Activated CD4-positive, alpha-beta memory T cell treated with anti-CD3 and anti-CD28 coated beads for 36 hours (primary cell): ENCODE measurements at regions of chr14 and their contacts with region 1.

Region 1: DNA sequence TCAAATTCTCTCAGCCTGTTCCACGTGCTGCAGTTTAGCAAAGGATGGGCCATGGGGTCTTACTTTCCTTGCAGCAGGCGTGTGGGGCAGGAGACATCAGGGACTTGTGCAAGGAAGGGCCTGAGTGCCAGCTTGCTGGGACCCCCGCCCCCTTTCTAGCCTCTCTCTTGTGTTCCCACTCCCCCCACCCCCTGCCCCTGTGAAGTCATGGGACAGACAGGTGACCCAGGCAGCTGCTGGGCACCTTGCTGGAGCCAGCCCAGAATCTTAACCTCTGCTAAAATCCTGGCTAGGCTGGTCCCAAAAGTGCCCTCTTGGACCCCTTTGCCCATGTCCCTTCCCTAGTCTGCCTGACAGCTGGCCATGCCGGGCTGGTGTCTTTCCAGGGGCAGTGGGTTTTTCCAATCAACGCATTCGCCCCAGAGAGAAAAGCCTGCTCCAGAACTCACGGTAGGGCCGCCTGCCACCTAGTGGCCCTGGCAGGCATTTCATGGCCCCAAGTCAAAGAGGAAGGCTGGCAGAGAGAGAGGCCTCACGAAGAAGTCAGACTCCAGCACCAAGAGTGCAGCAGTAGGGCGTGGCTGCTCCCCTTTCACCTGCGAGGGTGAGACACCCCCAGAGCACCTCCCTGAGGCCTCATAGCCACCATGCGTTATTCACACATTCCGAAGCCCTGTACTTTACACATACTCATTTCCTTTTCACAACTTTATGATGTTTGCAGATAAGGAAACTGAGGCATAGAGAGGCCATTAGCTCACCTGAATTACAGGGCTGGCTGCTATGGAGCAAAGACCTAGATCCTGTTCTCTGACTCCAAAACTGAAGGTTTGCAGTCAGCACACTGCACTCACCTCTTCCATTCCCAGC is 67.4 kb downstream of the LGMN start:
- DNase-seq: peak; percentile 85
- H3K4me3 Mint-ChIP-seq: no peak overlapping the region
- H3K27ac Mint-ChIP-seq: peak overlapping the region; percentile 45
- H3K4me1 Mint-ChIP-seq: peaks cover 32% of the 10 kb centered on the region
- H3K27me3 Mint-ChIP-seq: no peaks in the 10 kb centered on the region

Region 2: DNA sequence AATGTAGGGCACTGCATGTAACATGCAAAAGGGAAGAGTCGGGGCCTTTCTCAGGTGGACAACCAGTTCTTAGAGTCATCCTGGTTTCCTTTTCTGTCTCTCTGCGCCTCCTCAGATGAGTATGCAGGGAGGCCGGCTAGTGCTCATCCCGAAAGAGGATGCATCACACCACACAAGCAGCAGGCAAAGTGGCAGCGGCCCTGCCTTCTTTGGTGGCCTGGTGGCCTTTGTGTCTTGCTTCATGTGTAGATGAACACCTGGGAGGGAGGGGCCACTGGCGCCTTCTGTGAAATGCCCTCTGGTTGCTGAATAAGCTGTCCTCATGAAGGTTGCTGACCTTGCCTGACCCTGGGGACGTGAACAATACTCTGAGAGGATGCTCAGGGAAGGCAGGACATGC is 340.1 kb before region 1 on chr14:
- CTCF ChIA-PET with region 1: interaction called, 4 read pairs
- POLR2A ChIA-PET with region 1: no interaction called
- intact Hi-C with region 1: loop called (anchors 1 kb)
- DNase-seq: peak; percentile 86
- H3K4me3 Mint-ChIP-seq: peak overlapping the region; percentile 28
- H3K27ac Mint-ChIP-seq: peak overlapping the region; percentile 83
- H3K4me1 Mint-ChIP-seq: peaks cover 29% of the 10 kb centered on the region
- H3K27me3 Mint-ChIP-seq: peaks cover 56% of the 10 kb centered on the region

Region 3: DNA sequence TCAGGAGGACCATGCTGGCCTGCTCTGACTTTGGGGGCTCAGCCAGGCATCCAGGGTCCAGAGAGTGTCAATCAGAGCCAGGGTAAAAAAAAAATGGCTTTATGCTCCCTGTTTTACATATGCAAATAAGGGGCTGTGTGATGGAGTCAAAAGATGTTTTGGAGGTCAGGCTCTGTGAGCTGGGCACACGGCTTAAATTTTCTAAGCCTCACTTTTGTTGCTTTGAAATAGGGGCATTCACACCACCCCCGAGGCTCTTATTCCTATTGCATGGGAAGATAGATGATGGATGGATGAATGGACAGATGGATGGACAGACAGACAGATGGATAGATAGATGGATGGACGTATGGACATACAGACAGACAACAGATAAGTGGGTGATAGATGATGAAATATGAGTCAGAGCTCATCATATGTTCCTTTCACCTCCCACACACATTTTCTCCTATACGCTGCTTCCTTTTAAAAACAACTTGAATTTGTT is 124.7 kb before region 1 on chr14:
- CTCF ChIA-PET with region 1: interaction called, 6 read pairs
- POLR2A ChIA-PET with region 1: no interaction called
- intact Hi-C with region 1: loop called (anchors 1 kb)
- DNase-seq: no peak
- H3K4me3 Mint-ChIP-seq: no peak overlapping the region
- H3K27ac Mint-ChIP-seq: no peak overlapping the region
- H3K4me1 Mint-ChIP-seq: peaks cover 39% of the 10 kb centered on the region
- H3K27me3 Mint-ChIP-seq: peaks cover 4% of the 10 kb centered on the region

Region 4: GRCh38 chr14:92637228-92637627 is 43.8 kb before region 1 on chr14:
- CTCF ChIA-PET with region 1: no interaction called
- POLR2A ChIA-PET with region 1: no interaction called
- intact Hi-C with region 1: no loop called
- DNase-seq: no peak
- H3K4me3 Mint-ChIP-seq: no peak overlapping the region
- H3K27ac Mint-ChIP-seq: no peak overlapping the region
- H3K4me1 Mint-ChIP-seq: peaks cover 5% of the 10 kb centered on the region
- H3K27me3 Mint-ChIP-seq: no peaks in the 10 kb centered on the region

Region 5: DNA sequence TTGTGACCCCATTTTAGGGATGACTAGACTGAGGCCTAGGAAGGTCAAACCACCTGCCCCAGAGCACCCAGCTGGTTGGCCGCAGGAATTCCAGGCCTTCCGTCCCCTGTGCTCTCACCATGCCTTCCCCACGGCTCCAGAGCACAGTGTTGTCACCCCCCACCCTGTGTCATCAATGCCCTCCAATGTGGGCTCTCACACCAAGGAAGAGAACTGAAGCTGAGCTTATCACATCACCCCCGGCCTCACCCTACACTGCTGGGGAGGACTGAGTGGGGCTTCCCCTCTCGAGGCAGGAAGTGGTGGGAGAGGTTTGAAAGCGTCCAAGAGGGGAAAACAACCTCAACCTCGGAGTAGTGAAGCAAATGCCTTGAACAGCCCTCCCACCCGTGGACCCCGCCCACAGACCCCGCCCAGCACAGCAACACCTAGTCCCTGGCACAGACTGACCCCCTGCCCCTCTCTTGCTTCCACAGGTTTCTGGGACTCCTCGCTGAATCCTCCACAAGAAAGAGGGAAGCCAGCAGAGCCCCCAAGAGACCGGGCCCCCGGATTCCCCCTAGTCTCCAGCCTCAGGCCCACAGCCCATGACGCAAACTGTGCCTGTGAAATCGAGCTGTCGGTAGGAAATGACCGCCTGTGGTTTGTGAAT is 29.8 kb before region 1 on chr14:
- CTCF ChIA-PET with region 1: interaction called, 23 read pairs
- POLR2A ChIA-PET with region 1: interaction called, 12 read pairs
- intact Hi-C with region 1: loop called (anchors 1 kb)
- DNase-seq: peak; percentile 90
- H3K4me3 Mint-ChIP-seq: peak overlapping the region; percentile 93
- H3K27ac Mint-ChIP-seq: peak overlapping the region; percentile 97
- H3K4me1 Mint-ChIP-seq: peaks cover 77% of the 10 kb centered on the region
- H3K27me3 Mint-ChIP-seq: no peaks in the 10 kb centered on the region